ENCODE measurements at regions of chr6 and their contacts with region 1.

Region 1: GRCh38 chr6:134882426-134883038 is 67.4 kb downstream of the ALDH8A1 start:
- DNase-seq: peak; percentile 87

Region 2: GRCh38 chr6:134822920-134823709 is 59.4 kb before region 1 on chr6:
- intact Hi-C with region 1: loop called in 1 of 2 experiments (anchors 10 kb)
- DNase-seq: no peak

Region 3: GRCh38 chr6:134954272-134955000 is 71.9 kb after region 1 on chr6:
- intact Hi-C with region 1: no loop called
- DNase-seq: no peak

Measured in posterior vena cava (tissue), 2 donors.